Stomach (tissue), 19 donors: ENCODE measurements at regions of chr22 and their contacts with region 1.

Region 1: GRCh38 chr22:39519681-39520053 is 695 bp upstream of the ATF4 start:
- DNase-seq: peak; percentile 62 to 83
- H3K4me3 ChIP-seq: peak overlapping the region; percentile 95 to 100 (median 98)
- H3K27ac ChIP-seq: peak overlapping the region; percentile 98 to 100 (median 99)
- H3K4me1 ChIP-seq: peaks cover 39 to 54% (median 51%) of the 10 kb centered on the region in 4 donors
- H3K27me3 ChIP-seq: no peaks in the 10 kb centered on the region
- CTCF ChIP-seq: peak in 3 of 7 experiments; percentile 12 to 31 (median 28)
- EP300 ChIP-seq: no peak
- POLR2A ChIP-seq: peak in 1 of 4 donors; percentile 63

Region 2: DNA sequence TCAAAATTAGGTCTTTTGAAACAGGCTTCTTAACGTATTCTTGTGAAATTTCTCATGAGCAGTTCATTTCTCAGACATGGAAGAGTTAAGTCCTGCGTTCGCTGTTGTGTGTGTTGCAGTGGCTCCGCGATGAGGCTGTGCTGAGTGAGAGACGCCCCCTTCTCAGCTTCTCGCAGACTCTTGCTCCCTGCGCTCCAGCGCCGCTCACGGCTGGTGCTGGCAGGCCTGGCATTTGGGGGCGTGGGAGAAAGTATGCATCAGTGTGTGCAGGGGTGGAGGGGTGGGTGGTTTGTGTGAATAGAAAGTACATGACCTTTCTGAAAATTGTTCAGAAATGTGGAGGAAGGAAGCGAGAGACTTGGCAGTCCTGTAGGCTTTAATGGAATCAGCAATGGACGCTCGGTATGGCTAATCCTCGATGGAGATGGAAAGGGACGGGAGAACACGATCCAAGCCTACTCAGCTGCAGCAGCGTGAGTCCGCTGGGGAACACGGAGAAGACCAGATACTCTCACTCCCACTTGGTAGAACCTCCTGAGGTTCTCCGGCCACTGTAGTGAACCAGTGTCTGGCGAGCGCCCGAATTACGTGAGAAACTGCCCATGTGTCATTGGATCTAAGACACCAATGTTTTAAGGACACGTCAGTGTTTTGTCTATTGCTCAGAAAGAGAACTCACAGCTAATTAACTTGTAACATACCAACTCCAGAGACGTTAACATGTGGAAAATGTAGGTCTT is 114.2 kb before region 1 on chr22:
- intact Hi-C with region 1: loop called (anchors 10 kb)
- DNase-seq: peak in 1 of 2 donors; percentile 84
- H3K4me3 ChIP-seq: peak overlapping the region in 3 of 4 donors; percentile 6 to 20 (median 12)
- H3K27ac ChIP-seq: peak overlapping the region in 3 of 5 donors; percentile 29 to 62 (median 38)
- H3K4me1 ChIP-seq: peaks cover 3 to 61% (median 32%) of the 10 kb centered on the region in 4 donors
- H3K27me3 ChIP-seq: no peaks in the 10 kb centered on the region
- CTCF ChIP-seq: no peak
- EP300 ChIP-seq: no peak
- POLR2A ChIP-seq: no peak